MCF 10A (cell line): ENCODE measurements at regions of chr1 and their contacts with region 1.

Region 1: DNA sequence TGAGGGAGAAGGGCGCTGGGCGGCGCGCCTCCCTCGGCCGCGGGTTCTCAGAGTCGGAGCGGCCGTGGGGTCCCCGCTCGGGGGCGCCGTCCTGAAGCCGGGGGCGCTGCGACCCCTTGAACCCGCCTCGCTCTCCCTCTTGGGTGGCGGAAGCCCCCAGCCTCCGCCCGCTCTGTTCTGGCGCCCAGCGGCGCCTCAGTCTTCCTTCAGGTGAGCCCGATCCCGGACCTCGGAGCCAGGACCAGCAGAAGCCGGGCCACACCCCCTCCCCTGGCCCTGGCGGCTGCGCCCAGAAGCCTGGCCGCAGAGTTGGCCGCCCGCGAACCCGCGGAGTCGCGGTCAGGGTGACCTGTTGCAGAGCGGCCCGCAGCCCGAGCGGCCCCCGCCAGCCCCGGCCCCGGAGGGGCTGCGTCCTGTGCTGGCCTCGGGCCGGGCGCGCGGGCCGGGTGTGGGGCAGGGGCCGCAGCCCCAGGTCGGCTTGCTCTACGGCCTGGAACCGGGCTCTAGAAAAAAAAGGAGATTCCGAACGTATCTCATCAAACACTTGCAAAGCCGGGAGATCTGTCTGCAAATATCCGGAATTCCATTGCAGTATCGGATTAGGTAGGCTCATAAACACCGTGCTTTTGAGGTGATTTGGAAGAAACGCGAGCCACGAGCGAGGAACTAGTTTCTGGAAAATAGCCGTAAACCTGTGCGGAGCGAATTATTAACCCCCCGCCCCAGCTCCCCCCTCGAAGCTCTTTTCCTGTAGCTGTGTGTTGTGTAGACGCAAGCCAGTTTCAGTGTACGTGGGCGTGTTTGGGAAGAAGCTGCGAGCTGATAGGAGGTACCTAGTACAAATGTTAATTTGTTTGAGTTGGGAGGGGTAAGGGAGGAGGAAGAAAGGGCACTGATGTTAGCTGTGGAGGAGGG is 816 bp downstream of the RALGPS2 start:
- DNase-seq: peak; percentile 98
- H3K4me3 Mint-ChIP-seq: peak overlapping the region; percentile 79
- H3K27ac Mint-ChIP-seq: peak overlapping the region; percentile 91
- H3K4me1 Mint-ChIP-seq: peaks cover 25% of the 10 kb centered on the region
- H3K27me3 Mint-ChIP-seq: no peaks in the 10 kb centered on the region
- CTCF ChIP-seq: peak; percentile 6

Region 2: GRCh38 chr1:178607718-178608408 is 118.0 kb before region 1 on chr1:
- CTCF ChIA-PET with region 1: interaction called, 3 read pairs
- POLR2A ChIA-PET with region 1: interaction called, 17 read pairs
- intact Hi-C with region 1: loop called (anchors 2 kb)
- DNase-seq: no peak
- H3K4me3 Mint-ChIP-seq: no peak overlapping the region
- H3K27ac Mint-ChIP-seq: peak overlapping the region; percentile 88
- H3K4me1 Mint-ChIP-seq: peaks cover 30% of the 10 kb centered on the region
- H3K27me3 Mint-ChIP-seq: no peaks in the 10 kb centered on the region
- CTCF ChIP-seq: no peak

Region 3: GRCh38 chr1:178629252-178630154 is 96.4 kb before region 1 on chr1:
- CTCF ChIA-PET with region 1: no interaction called
- POLR2A ChIA-PET with region 1: interaction called, 6 read pairs
- intact Hi-C with region 1: loop called (anchors 1 kb)
- DNase-seq: no peak
- H3K4me3 Mint-ChIP-seq: no peak overlapping the region
- H3K27ac Mint-ChIP-seq: no peak overlapping the region
- H3K4me1 Mint-ChIP-seq: peaks cover 33% of the 10 kb centered on the region
- H3K27me3 Mint-ChIP-seq: no peaks in the 10 kb centered on the region
- CTCF ChIP-seq: no peak

Region 4: GRCh38 chr1:178684542-178685000 is 41.3 kb before region 1 on chr1:
- CTCF ChIA-PET with region 1: interaction called, 3 read pairs
- POLR2A ChIA-PET with region 1: interaction called, 19 read pairs
- intact Hi-C with region 1: no loop called
- DNase-seq: peak; percentile 89
- H3K4me3 Mint-ChIP-seq: no peak overlapping the region
- H3K27ac Mint-ChIP-seq: peak overlapping the region; percentile 73
- H3K4me1 Mint-ChIP-seq: peaks cover 42% of the 10 kb centered on the region
- H3K27me3 Mint-ChIP-seq: no peaks in the 10 kb centered on the region
- CTCF ChIP-seq: no peak

Region 5: GRCh38 chr1:178706432-178706831 is 19.4 kb before region 1 on chr1:
- CTCF ChIA-PET with region 1: interaction called, 16 read pairs
- POLR2A ChIA-PET with region 1: interaction called, 29 read pairs
- intact Hi-C with region 1: no loop called
- DNase-seq: peak; percentile 70
- H3K4me3 Mint-ChIP-seq: no peak overlapping the region
- H3K27ac Mint-ChIP-seq: no peak overlapping the region
- H3K4me1 Mint-ChIP-seq: peaks cover 25% of the 10 kb centered on the region
- H3K27me3 Mint-ChIP-seq: no peaks in the 10 kb centered on the region
- CTCF ChIP-seq: no peak

Region 6: GRCh38 chr1:178749581-178750166 is 23.8 kb after region 1 on chr1:
- CTCF ChIA-PET with region 1: interaction called, 34 read pairs
- POLR2A ChIA-PET with region 1: interaction called, 24 read pairs
- intact Hi-C with region 1: loop called (anchors 2 kb)
- DNase-seq: no peak
- H3K4me3 Mint-ChIP-seq: no peak overlapping the region
- H3K27ac Mint-ChIP-seq: no peak overlapping the region
- H3K4me1 Mint-ChIP-seq: peaks cover 7% of the 10 kb centered on the region
- H3K27me3 Mint-ChIP-seq: no peaks in the 10 kb centered on the region
- CTCF ChIP-seq: no peak

Region 7: DNA sequence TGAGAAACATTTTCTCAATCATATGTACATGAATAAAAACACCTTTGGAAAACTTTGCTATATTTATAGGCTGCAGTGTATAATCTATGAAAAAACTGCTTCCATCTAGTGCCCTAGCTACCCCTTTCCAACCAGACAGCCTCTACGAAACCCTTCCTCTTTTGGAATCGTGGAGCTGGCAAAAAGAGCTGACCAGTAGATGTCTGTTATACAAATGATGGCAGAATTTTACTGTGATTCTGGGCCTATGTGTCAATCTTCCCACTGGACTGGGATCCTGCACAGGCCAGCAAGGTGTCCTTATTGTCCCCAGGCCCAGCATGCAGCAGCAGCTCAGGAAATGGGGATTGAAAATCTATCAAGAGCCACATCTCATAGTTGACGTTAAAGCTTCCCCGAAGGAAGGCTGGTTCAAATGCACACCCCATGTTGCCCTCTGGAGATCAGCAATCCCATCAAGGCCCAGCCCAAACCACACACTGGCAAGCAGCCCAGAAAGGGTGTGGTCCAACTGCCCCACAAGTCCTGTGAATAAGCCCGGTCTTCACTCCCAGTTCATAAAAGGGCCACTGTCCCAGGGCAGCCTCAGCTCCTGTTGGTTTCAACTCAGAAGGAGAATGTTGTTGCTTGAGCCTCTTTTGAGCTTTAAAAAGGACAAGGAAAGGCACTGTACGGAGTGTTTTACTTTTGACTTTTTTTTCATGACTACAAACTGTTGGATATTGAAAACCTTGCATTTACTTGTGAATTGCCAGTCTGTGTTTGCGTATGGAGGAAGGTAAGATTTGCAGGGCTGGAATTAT is 291.1 kb after region 1 on chr1:
- CTCF ChIA-PET with region 1: interaction called, 4 read pairs
- POLR2A ChIA-PET with region 1: interaction called, 11 read pairs
- intact Hi-C with region 1: no loop called
- DNase-seq: peak; percentile 99
- H3K4me3 Mint-ChIP-seq: peak overlapping the region; percentile 26
- H3K27ac Mint-ChIP-seq: peak overlapping the region; percentile 54
- H3K4me1 Mint-ChIP-seq: peaks cover 29% of the 10 kb centered on the region
- H3K27me3 Mint-ChIP-seq: no peaks in the 10 kb centered on the region
- CTCF ChIP-seq: no peak